Mammary epithelial cell (primary cell): ENCODE measurements at regions of chr6 and their contacts with region 1.

Region 1: GRCh38 chr6:131460614-131461000 is 112.4 kb upstream of the ARG1 start:
- DNase-seq: no peak
- H3K4me3 ChIP-seq: no peak overlapping the region
- H3K27ac ChIP-seq: no peak overlapping the region
- H3K4me1 ChIP-seq: no peaks in the 10 kb centered on the region
- H3K27me3 ChIP-seq: peaks cover 3% of the 10 kb centered on the region
- CTCF ChIP-seq: no peak

Region 2: DNA sequence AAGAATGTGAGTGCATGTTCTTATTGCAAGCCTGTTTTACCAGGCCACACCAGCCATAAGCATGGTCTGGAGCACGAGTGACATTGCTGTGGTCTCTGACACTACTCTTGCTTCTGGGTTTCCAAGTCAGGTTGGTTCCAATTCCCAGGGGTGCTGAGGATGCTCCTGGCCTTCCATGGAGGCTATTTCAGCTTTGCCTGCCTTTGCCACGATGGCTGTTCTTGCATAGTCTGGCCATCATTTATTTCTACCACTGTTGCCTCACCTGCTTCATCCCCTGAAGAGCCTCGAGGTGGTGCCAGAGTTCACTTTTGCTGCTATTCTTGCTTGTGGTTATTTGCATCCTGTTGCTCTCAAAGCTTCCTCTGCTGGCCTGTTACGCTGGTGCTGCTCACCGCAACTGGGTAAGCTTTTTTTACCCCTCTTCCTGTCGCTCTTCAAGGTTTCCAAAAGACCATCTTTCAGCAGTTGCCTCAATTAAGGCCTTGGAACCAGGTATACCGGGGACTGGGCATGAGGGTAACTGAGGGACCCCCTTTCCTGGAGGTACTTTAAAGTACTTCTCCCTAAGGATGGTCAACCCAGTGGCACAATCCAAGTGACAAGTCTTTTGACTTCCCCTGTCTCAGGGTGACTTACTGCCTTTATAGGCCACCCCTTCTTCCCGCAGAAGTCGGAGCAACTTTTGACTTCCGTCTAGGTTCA is 260.9 kb before region 1 on chr6:
- CTCF ChIA-PET with region 1: no interaction called
- dilution Hi-C with region 1: no loop called
- in situ Hi-C with region 1: no loop called
- intact Hi-C with region 1: loop called (anchors 1 kb)
- DNase-seq: peak; percentile 55
- H3K4me3 ChIP-seq: no peak overlapping the region
- H3K27ac ChIP-seq: no peak overlapping the region
- H3K4me1 ChIP-seq: no peaks in the 10 kb centered on the region
- H3K27me3 ChIP-seq: no peaks in the 10 kb centered on the region
- CTCF ChIP-seq: peak; percentile 50 to 70

Region 3: GRCh38 chr6:131443514-131443913 is 17.1 kb before region 1 on chr6:
- CTCF ChIA-PET with region 1: no interaction called
- dilution Hi-C with region 1: no loop called
- in situ Hi-C with region 1: no loop called
- intact Hi-C with region 1: loop called (anchors 1 kb)
- DNase-seq: no peak
- H3K4me3 ChIP-seq: no peak overlapping the region
- H3K27ac ChIP-seq: no peak overlapping the region
- H3K4me1 ChIP-seq: no peaks in the 10 kb centered on the region
- H3K27me3 ChIP-seq: peaks cover 3% of the 10 kb centered on the region
- CTCF ChIP-seq: no peak